Naive thymus-derived CD4-positive, alpha-beta T cell (primary cell): ENCODE measurements at regions of chr1 and their contacts with region 1.

Region 1: DNA sequence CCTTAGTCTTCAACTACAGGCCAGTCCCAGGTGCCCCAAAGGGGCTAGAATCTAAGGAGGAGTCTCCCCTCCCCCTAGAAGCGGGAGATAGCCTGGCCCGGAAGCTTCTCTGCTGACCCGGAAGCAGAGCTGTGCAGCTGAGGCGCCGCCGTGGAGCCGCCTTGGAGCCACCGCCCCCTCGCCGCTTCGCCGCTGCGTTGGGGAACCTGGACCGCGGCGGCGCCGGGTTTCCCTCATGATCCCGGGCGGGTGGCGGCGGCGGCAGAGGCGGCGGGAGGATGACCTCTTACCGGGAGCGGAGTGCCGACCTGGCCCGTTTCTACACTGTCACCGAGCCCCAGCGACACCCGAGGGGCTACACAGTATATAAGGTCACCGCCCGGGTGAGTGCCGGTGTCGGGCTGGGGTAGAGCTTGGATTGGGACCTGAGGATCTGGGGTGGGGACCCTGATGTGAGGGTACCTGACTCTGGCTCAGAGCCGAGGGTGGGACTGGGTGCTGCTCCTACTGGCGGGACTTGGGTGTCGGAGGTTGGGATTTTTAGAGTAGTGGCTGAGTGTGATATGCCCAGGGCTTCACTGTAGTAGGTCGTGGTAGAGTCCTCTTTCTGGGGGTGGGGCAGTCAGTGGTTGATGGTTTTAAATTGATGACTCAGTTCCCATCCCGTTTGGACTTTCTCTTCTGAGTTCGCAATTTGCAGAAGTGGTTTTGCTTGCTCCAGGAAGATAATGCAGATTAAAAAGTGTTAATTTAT is at the start of gene RPS6KC1:
- DNase-seq: peak; percentile 64 to 82 (median 79)
- ATAC-seq: peak; percentile 97
- H3K4me3 ChIP-seq: peak within 1 kb of the TSS; percentile 97
- H3K4me3 Mint-ChIP-seq: peak within 1 kb of the TSS; percentile 93 to 99 (median 96)
- H3K27ac ChIP-seq: peak within 1 kb of the TSS; percentile 72
- H3K27ac Mint-ChIP-seq: peak within 1 kb of the TSS; percentile 75 to 98 (median 93)
- H3K4me1 ChIP-seq: peaks cover 0 to 13% of the 10 kb centered on the region in 2 donors
- H3K4me1 Mint-ChIP-seq: peaks cover 23 to 39% (median 35%) of the 10 kb centered on the region in 7 donors
- H3K27me3 ChIP-seq: peaks cover 0 to 4% of the 10 kb centered on the region in 2 donors
- H3K27me3 Mint-ChIP-seq: peaks cover 9 to 27% (median 23%) of the 10 kb centered on the region in 5 donors
- total RNA-seq, gene RPS6KC1: 9.1 to 18.9 (median 14.3) TPM

Region 2: GRCh38 chr1:213083112-213083445 is 31.8 kb after region 1 on chr1:
- CTCF ChIA-PET with region 1: no interaction called
- POLR2A ChIA-PET with region 1: no interaction called
- intact Hi-C with region 1: loop called in 1 of 2 experiments (anchors 2 kb)
- DNase-seq: no peak
- ATAC-seq: no peak
- H3K4me3 ChIP-seq: no peak overlapping the region
- H3K4me3 Mint-ChIP-seq: peak overlapping the region in 1 of 10 donors; percentile 74
- H3K27ac ChIP-seq: no peak overlapping the region
- H3K27ac Mint-ChIP-seq: peak overlapping the region in 2 of 9 donors; percentile 6 to 90
- H3K4me1 ChIP-seq: no peaks in the 10 kb centered on the region
- H3K4me1 Mint-ChIP-seq: peaks cover 0 to 40% (median 5%) of the 10 kb centered on the region in 7 donors
- H3K27me3 ChIP-seq: no peaks in the 10 kb centered on the region
- H3K27me3 Mint-ChIP-seq: no peaks in the 10 kb centered on the region

Region 3: DNA sequence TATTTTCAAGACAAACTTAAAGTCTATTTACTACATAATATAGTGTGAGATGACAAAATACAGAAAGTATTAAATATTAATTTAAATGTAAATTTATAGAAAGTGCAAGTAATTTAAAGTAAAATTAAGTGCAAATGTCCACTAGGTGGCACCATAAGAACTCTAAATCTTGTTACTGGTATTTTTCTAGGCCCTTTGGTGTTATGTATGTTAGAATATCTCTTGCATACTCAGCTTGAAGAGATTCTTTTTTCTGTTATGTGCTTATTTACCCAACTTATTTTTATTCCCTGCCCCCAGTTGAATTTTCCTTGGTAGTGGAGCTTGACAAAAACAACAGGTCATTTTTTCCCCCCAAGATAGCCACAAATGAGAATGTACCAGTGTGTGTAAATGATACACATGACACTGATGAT is 71.2 kb after region 1 on chr1:
- CTCF ChIA-PET with region 1: no interaction called
- POLR2A ChIA-PET with region 1: no interaction called
- intact Hi-C with region 1: no loop called
- DNase-seq: peak in 5 of 9 donors; percentile 8 to 21 (median 16)
- ATAC-seq: no peak
- H3K4me3 ChIP-seq: no peak overlapping the region
- H3K4me3 Mint-ChIP-seq: no peak overlapping the region
- H3K27ac ChIP-seq: no peak overlapping the region
- H3K27ac Mint-ChIP-seq: no peak overlapping the region
- H3K4me1 ChIP-seq: no peaks in the 10 kb centered on the region
- H3K4me1 Mint-ChIP-seq: peaks cover 0 to 8% (median 2%) of the 10 kb centered on the region in 7 donors
- H3K27me3 ChIP-seq: no peaks in the 10 kb centered on the region
- H3K27me3 Mint-ChIP-seq: no peaks in the 10 kb centered on the region